GM12878 (cell line): ENCODE measurements at regions of chr2 and their contacts with region 1.

Region 1: DNA sequence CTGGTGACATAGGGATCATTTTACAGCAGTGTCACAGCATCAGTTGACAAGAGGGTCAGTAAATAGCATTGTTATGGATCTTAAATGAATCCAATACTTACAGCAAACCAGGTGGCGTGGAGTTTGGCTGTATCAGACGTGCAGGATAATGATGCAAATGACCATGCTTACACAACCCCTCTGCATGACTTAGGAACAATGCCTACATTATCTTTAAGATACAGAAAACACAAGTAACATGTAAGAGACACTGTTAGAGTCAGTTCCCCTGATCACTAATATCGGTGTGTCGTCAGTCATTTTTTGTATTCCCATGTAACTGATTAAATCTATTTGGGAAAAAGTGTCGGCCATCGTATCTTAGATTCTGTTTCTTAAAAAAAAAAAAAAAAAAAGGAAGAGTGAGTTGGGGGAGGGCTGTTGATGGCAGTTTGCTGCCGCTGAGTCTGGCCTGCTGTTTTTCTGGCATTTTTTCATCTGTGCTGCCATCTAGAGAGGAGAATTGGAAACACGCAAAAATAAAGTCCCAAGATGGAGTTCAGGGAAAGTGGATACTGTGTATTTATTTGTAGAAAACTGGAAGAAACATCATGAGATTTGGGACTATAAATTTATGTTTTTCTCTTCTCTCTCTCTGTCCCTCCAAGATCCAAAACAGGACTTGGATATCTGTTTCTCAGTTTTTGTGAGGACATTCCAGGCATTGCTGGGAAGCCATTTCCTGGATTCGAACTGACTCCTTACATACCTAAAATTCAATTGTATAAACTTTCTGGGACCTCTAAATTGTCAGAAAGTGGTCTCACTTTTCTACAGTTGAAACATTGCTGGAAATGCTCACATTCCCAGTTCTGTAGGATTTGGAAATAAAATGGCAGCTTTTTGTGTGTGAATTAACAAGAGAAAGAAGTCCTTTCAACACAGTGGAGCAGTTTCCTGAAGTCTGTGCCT is 60.3 kb upstream of the AGPS start:
- DNase-seq: peak; percentile 45
- ATAC-seq: peak; percentile 92
- H3K4me3 ChIP-seq: no peak overlapping the region
- H3K27ac ChIP-seq: no peak overlapping the region
- H3K4me1 ChIP-seq: no peaks in the 10 kb centered on the region
- H3K27me3 ChIP-seq: no peaks in the 10 kb centered on the region
- CTCF ChIP-seq: peak; percentile 55 to 79 (median 62)
- EP300 ChIP-seq: no peak
- POLR2A ChIP-seq: no peak
- RAD21 ChIP-seq: peak; percentile 90

Region 2: DNA sequence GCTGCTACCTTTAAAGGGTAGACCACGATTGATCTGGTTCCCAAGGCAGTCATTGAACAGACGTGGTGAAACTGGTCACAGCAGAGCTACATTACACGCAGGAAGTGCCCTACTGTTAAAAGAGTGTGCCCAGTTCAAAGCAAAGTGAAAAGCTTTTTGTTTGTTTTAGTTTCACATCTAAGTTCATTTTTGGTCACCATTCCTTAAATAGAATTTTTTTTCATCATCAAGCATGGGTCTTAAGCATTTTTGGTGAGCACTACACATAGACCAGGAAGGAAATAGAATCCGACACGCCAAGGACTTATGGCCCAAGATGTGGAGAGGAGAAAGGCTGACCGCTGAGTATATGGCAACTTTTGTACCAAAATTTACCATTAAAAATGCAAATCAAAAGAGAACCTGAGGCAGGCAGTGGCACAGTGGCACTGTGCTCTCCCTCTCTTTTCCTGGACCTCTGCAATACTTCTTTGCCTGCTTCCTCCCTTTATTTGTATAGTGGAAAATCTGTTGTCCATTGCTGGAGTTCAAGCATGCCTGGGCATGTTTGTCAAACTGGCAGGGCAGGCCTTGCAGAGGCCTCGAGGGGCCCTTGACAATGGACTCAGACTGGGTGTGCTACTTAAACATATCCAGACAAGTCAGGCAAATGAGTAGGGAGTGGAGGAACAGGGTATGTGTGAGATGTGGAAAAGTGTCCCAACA is 162.4 kb before region 1 on chr2:
- CTCF ChIA-PET with region 1: interaction called, 163 read pairs
- POLR2A ChIA-PET with region 1: interaction called, 9 read pairs
- RAD21 ChIA-PET with region 1: interaction called, 102 read pairs
- SMC1A ChIA-PET with region 1: interaction called, 117 read pairs
- in situ Hi-C with region 1: loop called (anchors 5 kb)
- intact Hi-C with region 1: no loop called
- DNase-seq: peak; percentile 82
- ATAC-seq: peak; percentile 81
- H3K4me3 ChIP-seq: peak overlapping the region; percentile 9; the same call in 1 of the 2 replicates
- H3K27ac ChIP-seq: peak overlapping the region; percentile 84
- H3K4me1 ChIP-seq: peaks cover 33% of the 10 kb centered on the region
- H3K27me3 ChIP-seq: no peaks in the 10 kb centered on the region
- CTCF ChIP-seq: no peak
- EP300 ChIP-seq: no peak; a peak in 2 of 4 replicates
- POLR2A ChIP-seq: no peak
- RAD21 ChIP-seq: no peak

Region 3: DNA sequence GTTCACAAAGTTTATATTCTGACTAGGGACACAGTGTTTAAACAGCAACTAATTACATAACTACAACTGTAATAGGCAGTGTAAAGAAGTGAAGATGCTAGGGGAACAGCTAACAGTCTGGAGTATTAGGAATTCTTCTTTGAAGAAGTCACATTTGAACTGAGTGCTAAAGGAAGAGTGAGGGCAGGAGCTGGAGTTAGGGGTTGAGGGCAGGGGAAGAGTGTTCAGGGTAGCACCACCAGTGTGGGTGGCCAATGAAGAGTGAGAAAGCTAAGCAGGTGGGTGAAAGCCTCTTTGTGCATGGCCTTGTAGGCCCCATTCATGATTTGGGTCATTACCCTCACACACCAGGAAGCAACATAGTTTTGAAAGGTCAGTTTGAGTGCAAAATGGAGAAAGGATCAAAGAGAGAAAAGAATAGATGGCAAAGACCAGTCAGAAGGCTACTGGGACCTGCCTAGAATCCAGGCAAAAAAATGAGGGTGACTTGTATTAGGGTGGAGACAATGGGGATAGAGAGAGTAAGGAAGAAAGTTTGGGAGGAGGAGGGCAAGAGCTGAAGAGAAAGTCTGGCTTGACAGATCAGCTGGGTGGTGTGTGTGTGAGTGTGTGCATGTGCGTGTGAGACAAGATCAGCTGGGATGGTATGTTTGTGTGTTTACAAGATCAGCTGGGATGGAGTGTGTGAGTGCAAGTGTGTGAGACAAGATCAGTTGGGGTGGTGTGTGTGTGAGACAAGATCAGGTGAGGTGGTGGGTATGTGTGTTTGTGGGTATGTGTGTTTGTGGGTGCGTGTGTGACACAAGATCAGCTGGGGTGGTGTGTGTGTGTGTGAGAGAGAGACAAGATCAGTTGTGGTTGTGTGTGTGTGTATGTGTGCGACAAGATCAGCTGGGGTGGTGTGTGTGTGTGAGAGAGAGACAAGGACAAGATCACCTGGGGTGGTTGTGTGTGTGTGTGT is 16.7 kb after region 1 on chr2:
- CTCF ChIA-PET with region 1: interaction called, 34 read pairs
- POLR2A ChIA-PET with region 1: interaction called, 3 read pairs
- RAD21 ChIA-PET with region 1: interaction called, 3 read pairs
- SMC1A ChIA-PET with region 1: interaction called, 13 read pairs
- in situ Hi-C with region 1: no loop called
- intact Hi-C with region 1: no loop called
- DNase-seq: no peak
- ATAC-seq: peak; percentile 41
- H3K4me3 ChIP-seq: no peak overlapping the region
- H3K27ac ChIP-seq: no peak overlapping the region
- H3K4me1 ChIP-seq: peaks cover 9% of the 10 kb centered on the region
- H3K27me3 ChIP-seq: no peaks in the 10 kb centered on the region
- CTCF ChIP-seq: no peak
- EP300 ChIP-seq: no peak
- POLR2A ChIP-seq: no peak
- RAD21 ChIP-seq: no peak

Region 4: DNA sequence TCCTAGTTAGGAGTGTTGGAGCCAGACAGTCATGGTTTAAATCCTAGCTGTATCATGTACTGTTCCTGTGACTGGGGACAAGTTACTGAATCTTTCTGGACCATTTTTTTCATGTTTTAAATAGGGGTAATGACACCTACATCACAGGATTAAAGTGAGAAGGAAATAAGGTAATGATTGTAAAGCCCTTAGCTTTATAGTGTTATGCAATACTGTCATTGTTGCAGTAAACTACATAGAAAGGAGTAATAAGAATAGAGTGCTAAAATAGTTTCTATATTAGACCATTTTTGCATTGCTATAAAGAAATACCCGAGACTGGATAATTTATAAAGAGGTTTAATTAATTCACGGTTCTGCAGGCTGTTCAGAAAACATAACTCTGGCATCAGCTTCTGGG is 74.7 kb after region 1 on chr2:
- CTCF ChIA-PET with region 1: interaction called, 273 read pairs
- POLR2A ChIA-PET with region 1: no interaction called
- RAD21 ChIA-PET with region 1: interaction called, 100 read pairs
- SMC1A ChIA-PET with region 1: interaction called, 208 read pairs
- in situ Hi-C with region 1: loop called (anchors 5 kb)
- intact Hi-C with region 1: no loop called
- DNase-seq: no peak
- ATAC-seq: no peak
- H3K4me3 ChIP-seq: no peak overlapping the region
- H3K27ac ChIP-seq: no peak overlapping the region
- H3K4me1 ChIP-seq: no peaks in the 10 kb centered on the region
- H3K27me3 ChIP-seq: no peaks in the 10 kb centered on the region
- CTCF ChIP-seq: no peak
- EP300 ChIP-seq: no peak
- POLR2A ChIP-seq: no peak
- RAD21 ChIP-seq: no peak

Region 5: GRCh38 chr2:177489719-177490301 is 157.5 kb after region 1 on chr2:
- CTCF ChIA-PET with region 1: interaction called, 6 read pairs
- POLR2A ChIA-PET with region 1: no interaction called
- RAD21 ChIA-PET with region 1: no interaction called
- SMC1A ChIA-PET with region 1: no interaction called
- in situ Hi-C with region 1: no loop called
- intact Hi-C with region 1: loop called (anchors 5 kb)
- DNase-seq: no peak
- ATAC-seq: no peak
- H3K4me3 ChIP-seq: no peak overlapping the region
- H3K27ac ChIP-seq: no peak overlapping the region
- H3K4me1 ChIP-seq: no peaks in the 10 kb centered on the region
- H3K27me3 ChIP-seq: no peaks in the 10 kb centered on the region
- CTCF ChIP-seq: peak; percentile 37 to 49 (median 39); a peak in 5 of 6 replicates
- EP300 ChIP-seq: no peak
- POLR2A ChIP-seq: no peak
- RAD21 ChIP-seq: peak; percentile 65

Region 6: DNA sequence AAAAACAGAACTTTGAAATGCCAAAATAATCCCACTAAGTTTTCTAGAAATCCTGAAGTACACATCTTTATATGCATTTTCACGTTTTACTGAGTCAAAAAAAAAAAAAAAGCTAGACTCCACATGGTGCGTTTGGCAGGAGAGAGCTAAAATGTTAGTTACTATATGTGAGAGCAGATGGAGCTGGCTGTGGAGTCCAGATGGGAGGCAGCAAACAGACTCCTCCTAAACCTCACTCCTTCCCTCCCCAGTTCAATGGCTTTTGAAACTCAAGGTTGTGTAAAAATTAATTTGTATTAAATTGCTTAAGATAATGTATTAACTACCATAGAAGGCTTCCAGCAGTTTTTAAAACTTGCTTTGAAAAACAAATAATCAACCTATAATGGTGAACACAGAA is 309.0 kb after region 1 on chr2:
- CTCF ChIA-PET with region 1: no interaction called
- POLR2A ChIA-PET with region 1: no interaction called
- RAD21 ChIA-PET with region 1: no interaction called
- SMC1A ChIA-PET with region 1: no interaction called
- in situ Hi-C with region 1: no loop called
- intact Hi-C with region 1: no loop called
- DNase-seq: no peak
- ATAC-seq: no peak
- H3K4me3 ChIP-seq: no peak overlapping the region
- H3K27ac ChIP-seq: no peak overlapping the region
- H3K4me1 ChIP-seq: no peaks in the 10 kb centered on the region
- H3K27me3 ChIP-seq: no peaks in the 10 kb centered on the region
- CTCF ChIP-seq: no peak
- EP300 ChIP-seq: no peak
- POLR2A ChIP-seq: no peak
- RAD21 ChIP-seq: no peak

Region 7: GRCh38 chr2:177763532-177764265 is 431.4 kb after region 1 on chr2:
- CTCF ChIA-PET with region 1: interaction called, 11 read pairs
- POLR2A ChIA-PET with region 1: no interaction called
- RAD21 ChIA-PET with region 1: no interaction called
- SMC1A ChIA-PET with region 1: interaction called, 4 read pairs
- in situ Hi-C with region 1: no loop called
- intact Hi-C with region 1: loop called (anchors 1 kb)
- DNase-seq: no peak
- ATAC-seq: peak; percentile 100
- H3K4me3 ChIP-seq: no peak overlapping the region
- H3K27ac ChIP-seq: no peak overlapping the region
- H3K4me1 ChIP-seq: no peaks in the 10 kb centered on the region
- H3K27me3 ChIP-seq: no peaks in the 10 kb centered on the region
- CTCF ChIP-seq: peak; percentile 76 to 85 (median 79)
- EP300 ChIP-seq: no peak
- POLR2A ChIP-seq: no peak
- RAD21 ChIP-seq: peak; percentile 45; the same call in 1 of the 2 replicates